Ascending aorta (tissue), 2 donors: ENCODE measurements at regions of chr15 and their contacts with region 1.

Region 1: GRCh38 chr15:73700041-73700842 is 16.1 kb downstream of the CD276 start:
- DNase-seq: peak in 1 of 2 donors; percentile 86
- H3K4me3 ChIP-seq: no peak overlapping the region
- H3K27ac ChIP-seq: no peak overlapping the region
- H3K4me1 ChIP-seq: peaks cover 6 to 12% of the 10 kb centered on the region in 2 donors
- H3K27me3 ChIP-seq: no peaks in the 10 kb centered on the region
- CTCF ChIP-seq: peak; percentile 86 to 93 (median 87)

Region 2: GRCh38 chr15:73560501-73561117 is 139.6 kb before region 1 on chr15:
- intact Hi-C with region 1: loop called (anchors 5 kb)
- DNase-seq: no peak
- H3K4me3 ChIP-seq: no peak overlapping the region
- H3K27ac ChIP-seq: no peak overlapping the region
- H3K4me1 ChIP-seq: peaks cover 0 to 4% of the 10 kb centered on the region in 2 donors
- H3K27me3 ChIP-seq: no peaks in the 10 kb centered on the region
- CTCF ChIP-seq: peak in 2 of 3 experiments; percentile 25 to 56

Region 3: DNA sequence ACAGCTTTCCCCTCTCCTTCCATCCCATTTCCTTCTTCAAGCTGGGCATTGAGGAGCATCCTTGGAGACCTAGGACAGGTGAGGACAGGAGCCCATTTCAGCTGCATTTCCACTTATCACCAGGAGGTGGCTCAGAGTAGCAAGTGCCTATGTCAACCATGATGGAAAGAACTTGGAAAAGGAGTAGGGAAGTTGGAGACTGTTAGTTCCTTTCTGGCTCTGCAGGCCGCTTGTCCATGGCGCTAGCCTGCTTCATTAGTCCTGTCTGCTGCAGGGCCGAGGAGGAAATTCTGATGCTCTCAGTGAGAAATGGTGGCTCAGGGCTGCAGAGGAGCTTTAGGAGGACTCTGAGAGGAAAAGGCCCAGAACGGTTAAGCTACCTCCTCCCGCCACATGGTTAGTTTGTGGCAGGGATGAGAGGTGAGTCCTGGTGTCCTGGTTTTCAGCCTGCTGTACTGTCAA is 23.1 kb before region 1 on chr15:
- intact Hi-C with region 1: loop called (anchors 1 kb)
- DNase-seq: peak in 1 of 2 donors; percentile 82
- H3K4me3 ChIP-seq: no peak overlapping the region
- H3K27ac ChIP-seq: no peak overlapping the region
- H3K4me1 ChIP-seq: no peaks in the 10 kb centered on the region
- H3K27me3 ChIP-seq: no peaks in the 10 kb centered on the region
- CTCF ChIP-seq: peak; percentile 81 to 89 (median 86)